ENCODE measurements at regions of chr12 and their contacts with region 1.

Region 1: DNA sequence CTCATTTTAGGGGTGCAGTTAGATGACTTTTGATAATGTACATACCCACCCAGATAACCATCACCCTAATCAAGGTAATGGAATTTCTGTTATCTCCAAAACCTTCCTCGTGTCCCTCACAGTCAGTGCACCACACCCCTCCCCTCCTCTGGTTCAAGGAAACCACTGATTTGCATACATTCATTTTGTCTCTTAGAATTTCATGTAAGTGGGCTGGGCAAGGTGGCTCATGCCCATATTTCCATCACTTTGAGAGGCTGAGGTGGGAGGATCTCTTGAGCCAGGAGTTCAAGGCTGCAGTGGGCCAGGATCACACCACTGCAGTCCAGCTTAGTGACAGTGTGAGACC is 15.7 kb downstream of the ADIPOR2 start:
- DNase-seq: no peak
- H3K4me3 ChIP-seq: no peak overlapping the region
- H3K27ac ChIP-seq: no peak overlapping the region
- H3K4me1 ChIP-seq: no peaks in the 10 kb centered on the region
- H3K27me3 ChIP-seq: no peaks in the 10 kb centered on the region
- CTCF ChIP-seq: no peak

Region 2: DNA sequence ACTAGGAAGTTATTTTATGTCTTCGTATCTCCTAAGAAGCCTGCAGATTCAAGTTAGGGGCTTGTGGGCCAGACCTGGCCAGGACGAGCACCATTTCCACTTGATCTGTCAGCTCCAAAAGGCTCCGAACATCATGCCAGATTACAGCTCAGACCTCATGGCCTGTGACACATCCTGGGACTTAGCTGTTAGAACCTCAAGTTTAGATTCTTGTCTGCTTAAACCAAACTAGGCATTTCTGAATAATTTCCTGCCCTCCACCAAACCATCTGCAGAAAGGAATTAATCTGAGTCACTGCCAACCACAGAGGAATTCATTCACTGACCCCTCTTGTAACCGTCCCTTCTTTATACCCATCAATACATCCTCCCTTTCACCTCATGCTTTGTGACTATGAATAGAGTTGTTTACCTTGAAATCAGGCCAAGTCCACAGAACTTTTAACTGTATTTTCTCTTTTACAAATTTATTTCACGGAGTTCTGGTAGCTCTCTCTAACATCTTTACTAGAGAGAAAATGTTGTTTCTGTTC is 232.5 kb before region 1 on chr12:
- intact Hi-C with region 1: no loop called
- DNase-seq: no peak
- H3K4me3 ChIP-seq: no peak overlapping the region
- H3K27ac ChIP-seq: peak overlapping the region; percentile 20
- H3K4me1 ChIP-seq: peaks cover 14% of the 10 kb centered on the region
- H3K27me3 ChIP-seq: no peaks in the 10 kb centered on the region
- CTCF ChIP-seq: no peak

Region 3: GRCh38 chr12:1779783-1780182 is 73.2 kb after region 1 on chr12:
- intact Hi-C with region 1: loop called (anchors 10 kb)
- DNase-seq: no peak
- H3K4me3 ChIP-seq: no peak overlapping the region
- H3K27ac ChIP-seq: no peak overlapping the region
- H3K4me1 ChIP-seq: no peaks in the 10 kb centered on the region
- H3K27me3 ChIP-seq: no peaks in the 10 kb centered on the region
- CTCF ChIP-seq: no peak